Activated CD8-positive, alpha-beta memory T cell treated with anti-CD3 and anti-CD28 coated beads, Interleukin-2, amount 10 ng/mL, durations not matched to agents 7 days and 5 days (primary cell): ENCODE measurements at regions of chr2 and their contacts with region 1.

Region 1: GRCh38 chr2:231394211-231395141 is 1.0 kb upstream of the B3GNT7 start:
- DNase-seq: no peak
- ATAC-seq: no peak
- H3K4me3 Mint-ChIP-seq: peak overlapping the region; percentile 76
- H3K27ac Mint-ChIP-seq: peak overlapping the region; percentile 97
- H3K4me1 Mint-ChIP-seq: peaks cover 33% of the 10 kb centered on the region
- H3K27me3 Mint-ChIP-seq: peaks cover 21% of the 10 kb centered on the region

Region 2: DNA sequence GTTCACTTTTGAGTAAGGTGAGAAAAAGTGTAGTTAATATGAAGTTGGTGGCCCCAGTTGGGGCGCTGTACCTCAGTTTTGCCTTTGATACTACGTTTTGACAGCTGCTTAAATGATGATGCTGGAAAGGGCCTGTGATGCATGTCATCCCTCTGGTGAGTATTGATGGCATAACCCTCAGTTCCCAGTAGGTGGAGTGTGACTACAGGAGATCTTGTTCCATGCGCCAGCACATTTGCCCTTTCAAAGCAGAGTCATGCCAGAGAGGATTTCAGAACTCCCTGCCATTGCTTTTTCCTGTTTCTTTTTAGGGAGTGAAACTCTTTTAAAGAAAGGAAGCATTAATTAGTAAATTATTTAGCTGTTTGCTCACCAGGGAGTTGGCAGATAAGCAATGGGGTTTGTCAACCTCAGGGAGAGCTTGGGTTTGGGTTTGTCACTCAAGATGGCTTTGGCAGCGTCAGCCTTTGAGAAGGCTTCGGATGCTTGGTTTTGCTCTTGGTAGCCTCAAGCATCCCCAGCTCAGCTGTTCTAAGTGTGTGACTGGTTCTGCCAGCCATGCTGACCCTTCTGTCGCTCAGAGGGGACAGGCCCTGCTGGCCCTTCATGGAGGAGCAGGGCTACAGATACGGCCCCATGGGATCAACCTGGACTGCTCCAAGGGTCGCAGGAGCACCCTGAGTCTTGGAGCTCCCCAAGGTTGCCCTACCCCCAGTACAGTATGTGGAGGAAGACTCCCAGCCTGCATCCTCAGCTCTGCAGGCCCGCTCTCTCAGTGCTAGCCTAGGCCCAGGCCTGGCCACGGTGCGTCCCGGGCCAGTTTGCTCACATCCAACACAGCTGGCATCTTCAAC is 166.9 kb before region 1 on chr2:
- CTCF ChIA-PET with region 1: interaction called, 10 read pairs
- DNase-seq: peak; percentile 69
- ATAC-seq: peak; percentile 96
- H3K4me3 Mint-ChIP-seq: no peak overlapping the region
- H3K27ac Mint-ChIP-seq: no peak overlapping the region
- H3K4me1 Mint-ChIP-seq: no peaks in the 10 kb centered on the region
- H3K27me3 Mint-ChIP-seq: no peaks in the 10 kb centered on the region

Region 3: DNA sequence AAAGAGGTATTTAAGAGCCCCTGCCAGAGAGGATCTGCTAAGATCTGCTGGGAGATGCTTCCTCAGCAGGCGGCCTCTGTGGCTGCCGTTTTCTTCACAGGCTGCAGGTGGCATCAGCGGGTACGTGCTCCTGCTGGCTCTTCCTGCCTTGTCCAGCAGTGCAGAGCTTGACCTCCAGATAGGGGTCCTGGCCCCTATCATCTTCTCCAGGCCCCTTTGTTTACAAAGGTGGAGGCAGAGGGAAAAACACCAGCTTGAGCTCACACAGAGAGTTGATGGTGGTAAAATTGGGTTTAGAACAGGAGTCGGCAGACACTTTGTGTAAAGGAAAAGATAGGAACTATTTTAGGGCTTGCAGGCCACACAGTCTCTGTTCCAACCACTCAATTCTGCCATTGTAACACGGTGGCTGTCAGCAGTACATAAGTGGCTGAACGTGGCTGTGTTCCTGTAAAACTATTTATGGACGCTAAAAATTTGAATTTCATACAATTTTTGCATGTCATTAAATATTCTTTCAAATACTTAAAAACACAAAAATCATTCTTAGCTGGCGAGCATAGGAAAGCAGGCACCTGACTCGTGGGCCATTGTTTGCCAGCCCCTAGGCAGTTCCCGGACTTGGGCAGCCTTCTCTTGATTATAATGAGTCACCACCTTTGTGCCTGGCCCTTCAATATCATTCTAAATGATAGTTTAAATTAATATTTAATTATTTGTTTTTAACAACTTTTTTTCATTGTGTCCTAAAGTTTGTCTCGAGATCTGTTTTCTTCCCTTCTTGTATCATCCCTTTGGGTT is 97.2 kb before region 1 on chr2:
- CTCF ChIA-PET with region 1: interaction called, 10 read pairs
- DNase-seq: peak; percentile 49
- ATAC-seq: peak; percentile 53
- H3K4me3 Mint-ChIP-seq: no peak overlapping the region
- H3K27ac Mint-ChIP-seq: no peak overlapping the region
- H3K4me1 Mint-ChIP-seq: peaks cover 4% of the 10 kb centered on the region
- H3K27me3 Mint-ChIP-seq: no peaks in the 10 kb centered on the region

Region 4: GRCh38 chr2:231361671-231362554 is 32.6 kb before region 1 on chr2:
- CTCF ChIA-PET with region 1: interaction called, 10 read pairs
- DNase-seq: peak; percentile 71
- ATAC-seq: peak; percentile 89
- H3K4me3 Mint-ChIP-seq: no peak overlapping the region
- H3K27ac Mint-ChIP-seq: peak overlapping the region; percentile 81
- H3K4me1 Mint-ChIP-seq: peaks cover 21% of the 10 kb centered on the region
- H3K27me3 Mint-ChIP-seq: no peaks in the 10 kb centered on the region

Region 5: DNA sequence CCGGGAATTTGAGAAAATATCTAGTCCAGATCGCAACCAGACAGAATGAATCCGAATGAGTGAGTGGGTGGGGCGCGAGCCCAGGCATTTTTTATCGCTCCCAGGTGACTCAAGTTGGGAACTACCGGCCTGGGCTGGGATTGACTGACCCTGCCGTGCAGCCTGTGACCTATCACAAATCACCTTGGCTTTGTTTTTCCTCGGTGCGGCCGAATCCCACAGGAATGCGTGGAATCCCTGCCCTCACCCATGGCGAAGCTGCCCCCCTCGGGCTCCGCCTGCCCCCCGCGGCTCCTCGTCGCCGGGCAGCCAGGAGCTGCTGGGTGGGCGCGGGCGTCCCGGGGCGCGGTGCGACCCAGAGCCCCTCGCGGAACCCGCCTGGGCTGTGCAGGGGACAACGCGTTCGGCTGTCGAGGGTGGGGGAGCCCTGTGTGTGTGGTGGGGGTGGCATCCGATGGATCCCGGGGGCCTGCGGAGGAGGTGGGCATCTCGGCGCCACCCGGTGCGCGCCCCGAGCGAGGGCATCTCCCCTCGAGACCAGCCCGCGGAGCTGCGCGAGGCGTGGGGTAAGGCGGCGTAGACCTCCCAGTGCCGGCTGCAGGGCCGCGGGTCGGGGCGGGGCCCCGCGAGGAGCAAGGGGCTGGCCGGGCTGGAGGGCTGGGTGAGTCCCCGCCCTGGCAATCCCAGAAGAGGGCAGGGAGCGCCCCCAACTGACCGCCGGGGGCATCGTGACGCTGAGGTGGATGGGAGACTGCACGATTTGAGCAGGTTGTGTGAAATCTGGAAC is 17.5 kb after region 1 on chr2:
- CTCF ChIA-PET with region 1: interaction called, 32 read pairs
- DNase-seq: peak; percentile 84
- ATAC-seq: peak; percentile 99
- H3K4me3 Mint-ChIP-seq: peak overlapping the region; percentile 20
- H3K27ac Mint-ChIP-seq: no peak overlapping the region
- H3K4me1 Mint-ChIP-seq: peaks cover 8% of the 10 kb centered on the region
- H3K27me3 Mint-ChIP-seq: peaks cover 42% of the 10 kb centered on the region